ENCODE measurements at regions of chr2 and their contacts with region 1.

Region 1: GRCh38 chr2:197378494-197379307 is 56.1 kb downstream of the SF3B1 start:
- DNase-seq: peak; percentile 42
- H3K4me3 ChIP-seq: peak overlapping the region; percentile 14
- CTCF ChIP-seq: peak; percentile 63

Region 2: DNA sequence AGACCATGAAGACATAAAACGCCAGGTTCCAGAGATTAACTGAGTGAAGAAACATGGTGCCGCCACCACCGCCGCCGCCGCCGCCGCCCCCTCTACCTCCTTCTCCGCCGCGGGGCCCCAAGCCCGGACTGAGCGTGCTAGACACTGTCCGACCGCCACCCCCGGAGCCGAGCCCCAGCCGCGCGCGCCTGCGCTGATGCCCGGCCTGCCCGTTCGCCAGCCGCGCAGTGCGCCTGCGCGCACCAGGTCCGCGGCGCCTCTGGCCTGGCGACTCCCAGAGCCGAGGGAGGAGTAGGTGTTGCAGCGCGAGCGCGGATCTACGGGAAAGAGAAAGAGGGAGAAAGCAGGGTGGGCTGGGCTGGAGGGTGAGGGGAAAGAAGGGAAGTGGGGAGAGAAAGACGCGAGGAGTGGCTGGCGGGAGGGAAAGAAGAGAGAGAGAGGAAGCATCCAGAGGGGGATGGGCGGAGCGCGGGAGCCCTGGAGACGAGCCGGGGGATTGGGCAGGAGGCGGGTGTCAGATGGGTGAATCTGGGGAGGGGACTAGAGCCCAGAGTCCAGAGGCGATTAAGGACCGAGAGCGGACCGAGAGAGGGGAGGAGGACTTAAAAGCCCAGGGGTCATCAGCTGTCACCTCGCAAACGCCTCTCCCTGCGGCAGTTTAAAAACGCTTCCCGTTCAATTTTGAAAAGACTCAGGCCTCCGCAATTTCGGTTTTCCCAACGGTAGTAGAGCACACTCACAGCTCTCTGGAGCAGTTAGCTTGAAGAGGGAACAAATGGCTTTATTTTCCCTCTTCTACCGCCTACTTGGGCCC is 451.9 kb before region 1 on chr2 and contains the start of gene PGAP1:
- in situ Hi-C with region 1: loop called (anchors 10 kb)
- DNase-seq: peak; percentile 79
- H3K4me3 ChIP-seq: peak within 1 kb of the TSS; percentile 98
- CTCF ChIP-seq: no peak

Region 3: DNA sequence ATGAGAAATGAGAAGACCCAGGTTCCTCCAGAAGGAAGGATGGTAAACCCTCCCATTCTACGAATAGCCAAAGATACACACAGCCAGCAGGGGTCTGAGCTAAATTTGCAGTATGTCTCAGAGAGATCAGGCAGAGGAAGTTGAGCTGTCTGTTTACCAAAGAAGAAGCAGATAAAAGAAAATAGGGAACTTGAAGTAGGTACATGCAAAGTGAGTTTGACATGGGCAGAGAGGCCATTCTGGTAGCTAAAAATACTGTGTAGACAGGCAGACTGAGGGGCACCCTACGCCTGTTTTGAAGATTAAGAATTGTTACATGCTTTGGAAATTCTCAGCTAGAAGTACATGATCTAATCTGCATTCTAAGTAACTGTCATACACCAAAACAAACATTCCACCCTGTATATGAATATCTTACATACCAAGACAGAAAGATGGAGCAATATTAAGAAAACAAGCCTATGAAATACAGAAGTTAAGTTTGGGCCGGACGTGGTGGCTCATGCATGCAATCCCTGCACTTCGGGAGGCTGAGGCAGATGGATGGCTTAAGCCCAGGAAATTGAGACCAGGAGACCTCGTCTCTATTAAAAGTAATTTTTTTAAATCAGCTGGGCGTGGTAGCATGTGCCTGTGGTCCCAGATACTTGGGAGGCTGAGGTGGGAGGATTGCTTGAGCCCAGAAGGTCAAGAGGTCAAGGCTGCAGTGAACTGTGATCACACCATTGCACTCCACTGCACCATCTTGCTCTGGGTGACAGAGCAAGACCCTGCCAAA is 226.1 kb before region 1 on chr2:
- in situ Hi-C with region 1: no loop called
- DNase-seq: no peak
- H3K4me3 ChIP-seq: no peak overlapping the region
- CTCF ChIP-seq: no peak

Region 4: GRCh38 chr2:197191177-197191939 is 187.3 kb before region 1 on chr2:
- in situ Hi-C with region 1: loop called (anchors 5 kb)
- DNase-seq: peak; percentile 27
- H3K4me3 ChIP-seq: no peak overlapping the region
- CTCF ChIP-seq: peak; percentile 46

Region 5: GRCh38 chr2:197416268-197416667 is 37.6 kb after region 1 on chr2:
- in situ Hi-C with region 1: no loop called
- DNase-seq: no peak
- H3K4me3 ChIP-seq: no peak overlapping the region
- CTCF ChIP-seq: no peak

Measured in astrocyte of the cerebellum (primary cell).